ENCODE measurements at regions of chr11 and their contacts with region 1.

Region 1: DNA sequence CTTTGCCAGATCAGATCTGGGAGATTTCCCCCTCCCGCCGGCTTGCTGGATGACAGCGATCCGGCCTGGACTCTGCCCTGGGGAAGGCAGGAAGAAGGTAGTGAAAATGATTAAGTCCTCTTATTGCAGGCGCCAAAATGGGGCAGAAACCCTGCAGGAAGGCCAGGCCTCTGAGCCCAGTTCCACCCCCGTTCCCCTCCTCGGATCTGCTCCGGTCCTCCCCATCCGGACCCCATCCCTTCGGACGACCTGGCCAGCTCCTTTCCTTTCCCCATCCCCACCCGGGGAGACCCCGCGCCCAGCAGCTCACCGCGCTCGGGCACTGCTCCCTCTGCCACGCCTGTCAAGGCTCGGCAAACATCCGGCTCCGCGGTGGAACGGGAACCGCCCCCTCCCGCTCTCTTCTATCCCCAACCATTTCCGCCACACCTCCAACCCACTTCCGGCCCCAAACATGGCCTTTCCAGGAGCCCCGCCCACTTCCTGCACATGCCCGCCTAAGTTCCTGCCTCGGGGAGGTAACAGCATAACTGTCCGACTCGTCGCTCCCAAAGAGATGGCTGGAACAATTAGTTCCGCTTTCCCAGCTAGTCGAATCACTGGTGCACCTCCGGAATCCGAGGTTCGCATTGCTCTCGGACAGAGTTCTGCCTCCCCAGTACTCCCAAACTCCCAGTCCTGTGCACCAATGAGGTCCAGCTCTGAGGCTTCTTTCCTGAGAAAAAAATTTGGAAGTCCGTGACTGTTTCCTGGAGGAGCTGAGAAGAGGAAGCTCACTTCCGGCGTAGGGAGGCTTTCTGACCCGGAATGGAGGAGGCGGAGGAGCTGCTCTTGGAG is at the starts of genes ARHGAP1 and ZNF408:
- DNase-seq: peak; percentile 100
- H3K4me3 Mint-ChIP-seq: peak within 1 kb of the TSS; percentile 99
- H3K27ac Mint-ChIP-seq: peak within 1 kb of the TSS; percentile 98
- H3K4me1 Mint-ChIP-seq: peaks cover 38% of the 10 kb centered on the region
- H3K27me3 Mint-ChIP-seq: peaks cover 3% of the 10 kb centered on the region
- total RNA-seq, gene ARHGAP1: 59.1 and 61.7 TPM in 2 replicates
- total RNA-seq, gene ZNF408: 12.9 and 14.1 TPM in 2 replicates

Region 2: DNA sequence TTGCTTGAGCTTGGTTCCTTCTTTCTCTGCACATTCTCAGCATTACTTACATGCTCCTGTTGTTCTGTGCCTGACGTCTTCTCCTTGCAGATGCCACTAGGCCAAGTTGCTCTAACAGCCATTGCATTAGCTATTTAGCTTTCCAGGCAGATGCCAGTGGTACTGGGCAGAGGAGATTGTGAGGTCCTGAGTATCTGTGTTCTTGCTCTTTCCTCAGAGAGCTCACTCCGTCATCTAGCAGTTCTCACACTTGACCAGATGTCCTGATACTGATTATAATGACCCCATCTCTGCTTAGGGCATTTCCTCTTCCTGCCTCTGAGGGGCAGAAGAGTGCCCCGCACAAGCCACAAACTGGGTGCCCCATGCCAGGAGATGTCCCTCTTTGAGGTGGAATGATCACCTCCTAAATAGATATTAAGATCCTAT is 30.7 kb before region 1 on chr11:
- intact Hi-C with region 1: loop called (anchors 2 kb)
- DNase-seq: no peak
- H3K4me3 Mint-ChIP-seq: no peak overlapping the region
- H3K27ac Mint-ChIP-seq: peak overlapping the region; percentile 74
- H3K4me1 Mint-ChIP-seq: peaks cover 34% of the 10 kb centered on the region
- H3K27me3 Mint-ChIP-seq: no peaks in the 10 kb centered on the region

Region 3: GRCh38 chr11:46845740-46846509 is 145.5 kb after region 1 on chr11 and contains the start of gene CKAP5:
- intact Hi-C with region 1: loop called (anchors 5 kb)
- DNase-seq: peak; percentile 97
- H3K4me3 Mint-ChIP-seq: peak within 1 kb of the TSS; percentile 88
- H3K27ac Mint-ChIP-seq: peak within 1 kb of the TSS; percentile 97
- H3K4me1 Mint-ChIP-seq: peaks cover 35% of the 10 kb centered on the region
- H3K27me3 Mint-ChIP-seq: no peaks in the 10 kb centered on the region
- total RNA-seq, gene CKAP5: 124 and 133 TPM in 2 replicates

Region 4: GRCh38 chr11:46916286-46917108 is 216.0 kb after region 1 on chr11:
- intact Hi-C with region 1: no loop called
- DNase-seq: no peak
- H3K4me3 Mint-ChIP-seq: peak overlapping the region; percentile 70
- H3K27ac Mint-ChIP-seq: no peak overlapping the region
- H3K4me1 Mint-ChIP-seq: peaks cover 21% of the 10 kb centered on the region
- H3K27me3 Mint-ChIP-seq: peaks cover 71% of the 10 kb centered on the region

Region 5: DNA sequence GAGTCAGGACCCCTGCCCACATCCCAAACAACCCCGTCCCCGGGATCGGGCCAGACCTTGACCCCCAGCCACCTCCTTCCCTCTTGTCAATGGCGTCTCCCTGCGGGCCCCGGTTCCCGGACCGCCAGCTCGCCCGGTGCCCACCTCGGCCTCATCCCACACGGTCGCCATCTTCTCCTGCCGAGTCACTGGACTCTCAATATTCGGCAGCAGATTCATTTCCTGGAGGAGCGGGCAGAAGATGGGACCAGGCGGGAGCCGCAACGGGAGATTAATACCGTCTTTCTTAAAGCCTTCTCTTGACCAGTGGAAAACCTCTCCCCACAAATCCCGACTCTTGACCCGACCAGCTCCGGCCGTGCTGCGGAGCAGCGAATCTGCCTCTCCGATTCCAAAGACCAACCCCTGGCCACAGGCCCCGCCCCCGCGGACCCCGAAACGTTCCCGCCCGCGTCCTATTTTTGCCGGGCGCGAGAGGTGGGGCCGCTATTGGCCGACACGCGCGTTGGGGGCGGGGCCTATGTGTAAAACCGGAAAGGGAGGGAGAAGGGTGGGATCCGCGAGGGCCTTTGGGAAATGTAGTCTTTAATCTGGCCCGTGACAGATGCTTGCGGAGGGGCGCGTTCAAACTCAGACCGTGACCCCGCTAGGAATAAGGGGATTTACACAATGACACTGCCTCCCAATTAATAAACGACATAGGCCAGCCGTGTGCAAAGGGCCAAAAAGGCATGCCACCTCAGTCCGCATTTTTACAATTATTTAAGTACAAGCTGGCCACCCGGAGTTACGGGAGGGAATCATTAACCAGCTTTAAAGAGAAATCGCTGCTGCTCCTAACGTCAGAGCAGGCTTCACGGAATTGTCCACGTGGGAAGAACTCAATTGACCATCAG is 725.9 kb after region 1 on chr11 and contains the start of gene PSMC3:
- intact Hi-C with region 1: loop called (anchors 2 kb)
- DNase-seq: peak; percentile 100
- H3K4me3 Mint-ChIP-seq: peak within 1 kb of the TSS; percentile 100
- H3K27ac Mint-ChIP-seq: peak within 1 kb of the TSS; percentile 99
- H3K4me1 Mint-ChIP-seq: peaks cover 19% of the 10 kb centered on the region
- H3K27me3 Mint-ChIP-seq: no peaks in the 10 kb centered on the region
- total RNA-seq, gene PSMC3: 230 and 234 TPM in 2 replicates

Measured in activated CD4-positive, alpha-beta T cell treated with anti-CD3 and anti-CD28 coated beads, Interleukin-2, amount 10 ng/mL, durations not matched to agents 24 days and 14 days (primary cell).